ENCODE measurements at regions of chr4 and their contacts with region 1.

Region 1: GRCh38 chr4:37864786-37865185 is 26.1 kb upstream of the TBC1D1 start:
- DNase-seq: no peak
- H3K4me3 ChIP-seq: no peak overlapping the region
- H3K27ac ChIP-seq: peak overlapping the region in 1 of 4 donors; percentile 34
- H3K4me1 ChIP-seq: no peaks in the 10 kb centered on the region
- H3K27me3 ChIP-seq: no peaks in the 10 kb centered on the region
- CTCF ChIP-seq: no peak
- EP300 ChIP-seq: no peak
- POLR2A ChIP-seq: no peak

Region 2: DNA sequence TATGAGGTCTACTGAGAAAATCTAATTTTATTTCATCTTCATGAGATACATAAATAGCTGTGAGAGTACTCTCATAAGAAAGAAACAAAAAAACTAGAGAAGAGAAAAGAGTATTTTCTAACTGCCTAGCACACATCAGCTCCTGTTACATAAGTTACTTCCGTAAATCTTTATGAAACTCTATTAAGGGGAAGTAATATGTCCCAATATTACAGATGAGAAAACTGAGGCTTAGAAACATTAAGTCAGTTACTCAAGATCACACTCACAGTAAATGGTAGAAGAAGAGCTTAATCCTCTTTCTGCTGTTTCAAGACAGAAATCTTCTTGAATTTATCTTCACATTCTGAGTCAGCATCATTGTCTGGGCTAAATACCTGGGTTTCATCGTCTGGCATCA is 1419.3 kb before region 1 on chr4:
- in situ Hi-C with region 1: no loop called
- intact Hi-C with region 1: loop called (anchors 10 kb)
- DNase-seq: no peak
- H3K4me3 ChIP-seq: no peak overlapping the region
- H3K27ac ChIP-seq: no peak overlapping the region
- H3K4me1 ChIP-seq: no peaks in the 10 kb centered on the region
- H3K27me3 ChIP-seq: no peaks in the 10 kb centered on the region
- CTCF ChIP-seq: no peak
- EP300 ChIP-seq: no peak
- POLR2A ChIP-seq: no peak